Naive thymus-derived CD4-positive, alpha-beta T cell (primary cell): ENCODE measurements at regions of chr9 and their contacts with region 1.

Region 1: GRCh38 chr9:20684035-20684872 is at the start of gene FOCAD:
- DNase-seq: peak; percentile 94 to 99 (median 96)
- ATAC-seq: peak; percentile 99
- H3K4me3 ChIP-seq: peak within 1 kb of the TSS; percentile 95
- H3K4me3 Mint-ChIP-seq: peak within 1 kb of the TSS; percentile 89 to 98 (median 96)
- H3K27ac ChIP-seq: peak within 1 kb of the TSS; percentile 81
- H3K27ac Mint-ChIP-seq: peak within 1 kb of the TSS; percentile 78 to 96 (median 92)
- H3K4me1 ChIP-seq: peaks cover 0 to 6% of the 10 kb centered on the region in 2 donors
- H3K4me1 Mint-ChIP-seq: peaks cover 11 to 29% (median 24%) of the 10 kb centered on the region in 7 donors
- H3K27me3 ChIP-seq: no peaks in the 10 kb centered on the region
- H3K27me3 Mint-ChIP-seq: no peaks in the 10 kb centered on the region
- total RNA-seq, gene FOCAD: 12.8 to 33.7 (median 22.3) TPM

Region 2: DNA sequence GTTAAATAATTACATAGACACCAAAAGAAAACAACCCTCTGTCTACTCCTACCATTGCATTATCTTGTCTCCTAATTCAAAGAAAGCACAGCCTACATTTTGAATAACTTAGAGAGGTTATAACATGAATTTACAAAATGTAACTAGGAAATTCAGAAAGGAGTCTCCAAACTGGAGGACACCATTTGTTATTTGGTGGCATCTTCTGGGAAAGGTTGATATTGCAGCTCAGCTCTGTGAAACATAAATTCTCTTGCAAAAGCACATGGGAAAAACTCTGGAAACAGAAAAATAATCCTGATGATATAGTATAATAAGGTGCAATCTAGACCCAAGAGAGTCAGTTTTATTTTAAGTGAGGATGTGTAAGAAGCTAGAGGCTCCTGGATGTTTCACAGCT is 277.2 kb before region 1 on chr9:
- CTCF ChIA-PET with region 1: no interaction called
- POLR2A ChIA-PET with region 1: no interaction called
- intact Hi-C with region 1: no loop called
- DNase-seq: no peak
- ATAC-seq: no peak
- H3K4me3 ChIP-seq: no peak overlapping the region
- H3K4me3 Mint-ChIP-seq: peak overlapping the region in 1 of 10 donors; percentile 34
- H3K27ac ChIP-seq: no peak overlapping the region
- H3K27ac Mint-ChIP-seq: peak overlapping the region in 3 of 9 donors; percentile 28 to 48 (median 38)
- H3K4me1 ChIP-seq: peaks cover 0 to 30% of the 10 kb centered on the region in 2 donors
- H3K4me1 Mint-ChIP-seq: peaks cover 21 to 95% (median 88%) of the 10 kb centered on the region in 7 donors
- H3K27me3 ChIP-seq: no peaks in the 10 kb centered on the region
- H3K27me3 Mint-ChIP-seq: no peaks in the 10 kb centered on the region

Region 3: DNA sequence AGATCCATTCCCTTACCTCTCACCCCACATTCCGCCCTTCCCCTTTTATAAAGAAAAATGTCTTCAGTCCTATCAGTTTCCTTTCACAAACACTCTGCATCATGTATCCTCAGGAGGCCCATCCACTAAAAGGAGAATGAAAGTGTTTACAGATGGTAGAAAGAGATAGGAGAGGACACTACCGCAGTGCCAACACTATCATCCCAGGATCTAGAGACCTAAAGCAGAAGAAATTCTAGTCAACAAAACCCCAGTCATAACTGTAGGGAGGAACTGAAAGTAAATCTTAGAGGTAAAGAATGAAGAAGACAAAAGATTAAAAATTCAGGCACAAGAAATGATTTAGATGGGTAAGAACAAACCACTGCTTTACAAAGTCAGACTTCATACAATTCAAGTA is 176.0 kb before region 1 on chr9:
- CTCF ChIA-PET with region 1: no interaction called
- POLR2A ChIA-PET with region 1: no interaction called
- intact Hi-C with region 1: loop called in 1 of 2 experiments (anchors 5 kb)
- DNase-seq: peak in 3 of 9 donors; percentile 8 to 22 (median 14)
- ATAC-seq: peak; percentile 60
- H3K4me3 ChIP-seq: no peak overlapping the region
- H3K4me3 Mint-ChIP-seq: peak overlapping the region; percentile 4 to 76 (median 64)
- H3K27ac ChIP-seq: peak overlapping the region; percentile 24
- H3K27ac Mint-ChIP-seq: peak overlapping the region; percentile 54 to 95 (median 85)
- H3K4me1 ChIP-seq: peaks cover 11 to 54% of the 10 kb centered on the region in 2 donors
- H3K4me1 Mint-ChIP-seq: peaks cover 64 to 90% (median 89%) of the 10 kb centered on the region in 7 donors
- H3K27me3 ChIP-seq: no peaks in the 10 kb centered on the region
- H3K27me3 Mint-ChIP-seq: no peaks in the 10 kb centered on the region

Region 4: DNA sequence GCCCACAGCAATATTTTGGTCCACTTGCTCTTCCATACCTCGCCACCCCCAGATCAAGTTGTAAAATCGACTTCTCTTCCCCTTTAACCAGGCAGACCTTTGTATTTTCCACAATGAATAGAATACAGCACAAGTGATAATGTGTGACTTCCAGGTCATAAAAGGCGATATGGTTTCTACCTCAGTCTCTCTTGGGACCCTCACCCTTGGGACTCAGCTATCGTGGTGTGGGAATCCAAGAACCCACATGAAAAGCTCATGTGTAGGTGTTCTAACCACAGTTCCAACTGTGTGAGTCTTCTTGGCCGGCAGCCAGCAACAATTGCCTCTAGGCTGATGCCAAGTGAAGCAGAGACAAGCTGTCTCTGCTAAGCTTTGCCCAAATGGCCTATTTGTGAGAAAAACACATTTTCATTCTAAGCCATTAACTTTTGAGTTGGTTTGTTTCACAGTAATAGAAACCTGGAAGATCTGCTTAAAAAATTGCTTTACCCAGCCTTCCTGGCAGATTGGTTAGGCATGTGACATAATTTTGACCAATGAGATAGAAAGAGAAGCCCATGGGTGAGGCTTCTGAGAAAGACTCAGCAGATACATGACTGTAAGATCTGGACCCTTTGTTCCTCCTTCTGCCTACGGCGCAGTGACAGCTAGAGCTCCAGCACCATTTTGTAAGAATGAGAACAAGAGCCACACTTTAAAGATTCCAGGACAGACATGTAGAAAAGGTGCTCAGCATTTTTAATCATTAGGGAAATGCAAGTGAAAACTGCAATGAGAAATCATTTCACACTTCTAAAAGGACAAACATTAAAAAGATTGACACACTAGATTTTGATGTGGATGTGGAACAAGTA is 43.7 kb before region 1 on chr9:
- CTCF ChIA-PET with region 1: no interaction called
- POLR2A ChIA-PET with region 1: interaction called, 3 read pairs
- intact Hi-C with region 1: loop called in 1 of 2 experiments (anchors 1 kb)
- DNase-seq: peak; percentile 44 to 82 (median 76)
- ATAC-seq: peak; percentile 84
- H3K4me3 ChIP-seq: peak overlapping the region; percentile 2
- H3K4me3 Mint-ChIP-seq: peak overlapping the region; percentile 39 to 81 (median 73)
- H3K27ac ChIP-seq: no peak overlapping the region
- H3K27ac Mint-ChIP-seq: peak overlapping the region; percentile 28 to 89 (median 63)
- H3K4me1 ChIP-seq: peaks cover 11 to 15% of the 10 kb centered on the region in 2 donors
- H3K4me1 Mint-ChIP-seq: peaks cover 10 to 26% (median 20%) of the 10 kb centered on the region in 7 donors
- H3K27me3 ChIP-seq: no peaks in the 10 kb centered on the region
- H3K27me3 Mint-ChIP-seq: peaks cover 0 to 22% (median 0%) of the 10 kb centered on the region in 5 donors

Region 5: GRCh38 chr9:21031091-21031807 is 347.0 kb after region 1 on chr9 and contains the start of gene HACD4:
- CTCF ChIA-PET with region 1: no interaction called
- POLR2A ChIA-PET with region 1: interaction called, 3 read pairs
- intact Hi-C with region 1: loop called (anchors 1 kb)
- DNase-seq: peak; percentile 53 to 76 (median 73)
- ATAC-seq: peak; percentile 87
- H3K4me3 ChIP-seq: peak within 1 kb of the TSS; percentile 62
- H3K4me3 Mint-ChIP-seq: peak within 1 kb of the TSS in 7 of 10 donors; percentile 65 to 86 (median 76)
- H3K27ac ChIP-seq: peak within 1 kb of the TSS; percentile 78
- H3K27ac Mint-ChIP-seq: peak within 1 kb of the TSS in 7 of 9 donors; percentile 71 to 88 (median 81)
- H3K4me1 ChIP-seq: peaks cover 12 to 16% of the 10 kb centered on the region in 2 donors
- H3K4me1 Mint-ChIP-seq: peaks cover 13 to 42% (median 30%) of the 10 kb centered on the region in 7 donors
- H3K27me3 ChIP-seq: no peaks in the 10 kb centered on the region
- H3K27me3 Mint-ChIP-seq: no peaks in the 10 kb centered on the region
- total RNA-seq, gene HACD4: 9.3 to 15.2 (median 13.6) TPM